Tibial artery (tissue), 4 donors: ENCODE measurements at regions of chr18 and their contacts with region 1.

Region 1: DNA sequence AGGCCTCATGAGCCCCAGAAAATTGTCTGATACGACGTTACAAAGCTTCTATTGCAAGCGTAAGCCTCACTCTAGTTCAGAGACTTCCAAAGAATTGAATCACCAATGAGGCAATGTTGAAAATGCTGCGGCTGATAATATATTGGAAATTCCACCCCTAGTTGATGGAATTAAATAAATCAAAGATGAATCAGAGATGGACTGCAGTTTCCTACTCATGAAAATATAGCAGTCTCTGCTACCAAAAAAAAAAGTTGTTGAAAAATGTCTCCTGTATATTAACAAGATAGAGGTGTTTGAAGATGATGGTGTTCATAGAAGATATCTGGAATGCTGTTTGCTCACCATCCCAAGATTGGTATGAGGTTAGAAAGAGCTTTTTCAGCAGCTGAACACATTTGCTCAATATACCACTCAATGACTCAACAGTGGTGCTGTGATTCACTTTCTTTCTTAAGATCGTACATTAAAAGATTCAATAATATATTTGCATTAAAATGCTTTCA is 99.8 kb upstream of the ARHGAP28 start:
- DNase-seq: no peak
- H3K4me3 ChIP-seq: no peak overlapping the region
- H3K27ac ChIP-seq: no peak overlapping the region
- H3K4me1 ChIP-seq: peaks cover 0 to 12% (median 0%) of the 10 kb centered on the region in 4 donors
- H3K27me3 ChIP-seq: no peaks in the 10 kb centered on the region
- CTCF ChIP-seq: no peak

Region 2: DNA sequence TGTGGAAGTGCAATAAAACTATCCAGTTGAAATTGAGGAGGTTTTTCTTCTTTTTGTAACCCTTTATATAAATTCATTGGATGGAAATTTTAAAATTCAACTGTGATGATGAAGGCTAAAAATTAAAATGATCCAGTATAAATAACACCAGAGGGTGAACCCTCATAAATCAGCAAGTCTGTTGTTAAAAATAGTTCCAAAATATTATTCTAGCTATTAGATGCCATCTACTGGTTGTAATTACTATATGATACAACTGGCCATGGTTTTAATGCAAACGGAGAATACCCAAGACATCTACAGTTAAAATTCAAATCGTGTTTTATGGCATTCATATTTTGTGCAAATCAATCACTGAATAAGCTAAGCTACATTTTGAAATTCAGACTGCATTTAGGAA is 788.2 kb before region 1 on chr18:
- intact Hi-C with region 1: no loop called
- DNase-seq: no peak
- H3K4me3 ChIP-seq: no peak overlapping the region
- H3K27ac ChIP-seq: no peak overlapping the region
- H3K4me1 ChIP-seq: no peaks in the 10 kb centered on the region
- H3K27me3 ChIP-seq: no peaks in the 10 kb centered on the region
- CTCF ChIP-seq: no peak

Region 3: GRCh38 chr18:6659963-6660725 is 30.5 kb after region 1 on chr18:
- intact Hi-C with region 1: loop called (anchors 1 kb)
- DNase-seq: no peak
- H3K4me3 ChIP-seq: no peak overlapping the region
- H3K27ac ChIP-seq: no peak overlapping the region
- H3K4me1 ChIP-seq: no peaks in the 10 kb centered on the region
- H3K27me3 ChIP-seq: no peaks in the 10 kb centered on the region
- CTCF ChIP-seq: no peak